ENCODE measurements at regions of chr5 and their contacts with region 1.

Region 1: GRCh38 chr5:79133657-79134451 is 22.2 kb downstream of the BHMT start:
- DNase-seq: peak; percentile 31
- H3K4me3 ChIP-seq: peak overlapping the region; percentile 52
- CTCF ChIP-seq: peak; percentile 84

Region 2: DNA sequence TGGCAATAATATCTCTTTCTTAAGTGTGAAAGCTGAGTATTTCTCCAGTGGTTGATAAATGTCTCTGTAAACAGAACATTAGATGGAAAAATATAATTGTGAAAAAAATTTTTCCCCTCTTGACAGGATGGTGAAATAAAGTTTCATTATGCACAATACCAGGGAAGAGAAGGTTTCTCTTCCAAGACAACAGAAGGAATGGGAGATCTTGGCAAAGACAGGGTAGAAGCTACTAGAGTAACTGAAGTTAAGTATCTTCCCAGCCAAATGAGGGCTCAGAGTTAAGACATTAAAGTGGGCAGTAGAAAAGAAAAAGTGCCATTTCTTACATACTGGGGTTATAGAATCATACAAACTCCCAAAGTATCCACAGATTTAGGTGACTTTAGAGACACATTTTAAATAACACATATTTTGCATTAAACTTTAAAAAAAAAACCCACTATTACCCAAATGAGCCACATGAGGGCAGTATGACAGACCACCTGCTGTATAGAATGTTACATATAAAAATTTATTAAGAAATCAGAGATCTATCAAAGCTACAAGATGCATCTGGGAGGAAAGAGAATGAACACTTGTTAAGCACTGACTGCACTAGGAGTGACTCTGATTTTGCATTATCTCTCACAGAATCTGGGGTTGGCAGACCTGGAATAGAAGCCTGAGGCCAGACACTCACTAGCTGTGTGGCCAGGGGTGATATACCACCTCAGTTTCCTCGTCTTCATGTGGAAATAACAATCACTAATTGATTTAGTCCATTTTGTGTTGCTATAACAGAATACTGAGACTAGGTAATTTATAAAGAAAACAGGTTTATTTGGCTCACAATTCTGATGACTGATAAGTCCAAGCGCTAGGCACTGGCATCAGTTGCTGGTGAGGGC is 247.3 kb before region 1 on chr5:
- CTCF ChIA-PET with region 1: interaction called, 17 read pairs
- POLR2A ChIA-PET with region 1: no interaction called
- DNase-seq: no peak
- H3K4me3 ChIP-seq: no peak overlapping the region
- CTCF ChIP-seq: peak; percentile 27

Region 3: DNA sequence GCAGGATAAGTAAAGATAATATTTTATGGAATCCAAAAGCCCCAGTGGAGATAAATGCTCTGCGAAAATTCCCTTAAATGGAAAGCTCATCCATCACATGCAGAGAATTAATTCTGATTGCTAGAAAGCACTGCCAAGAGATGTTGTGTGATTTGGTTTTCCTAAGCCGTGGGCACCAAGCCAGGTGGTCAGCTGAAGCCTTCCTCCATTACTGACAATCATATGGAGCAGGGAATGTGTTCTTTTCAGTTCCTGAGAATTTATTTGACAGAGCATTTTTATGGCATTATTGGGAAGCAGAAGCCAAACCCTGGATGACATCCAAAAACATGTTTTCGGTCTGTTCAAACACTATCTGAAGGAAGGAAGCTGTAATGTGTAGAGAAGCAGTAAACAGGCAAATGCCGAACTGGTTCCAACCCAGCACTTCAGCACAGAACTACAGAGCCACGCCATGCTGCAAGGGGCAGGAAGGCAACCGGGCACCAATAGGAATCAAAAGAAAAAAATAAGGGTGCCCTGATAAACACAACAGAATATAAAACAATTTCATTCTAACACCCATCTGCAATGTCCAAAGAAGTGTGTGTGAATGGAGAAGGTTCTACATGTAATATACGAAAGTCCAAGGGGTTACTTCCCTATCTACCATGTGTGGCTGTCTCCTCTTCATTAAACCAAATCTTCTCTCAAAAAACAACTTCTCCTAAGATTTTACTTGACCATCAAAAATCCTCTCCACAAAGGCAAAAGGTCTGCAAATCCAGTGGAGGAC is 161.0 kb before region 1 on chr5:
- CTCF ChIA-PET with region 1: interaction called, 16 read pairs
- POLR2A ChIA-PET with region 1: no interaction called
- DNase-seq: no peak
- H3K4me3 ChIP-seq: no peak overlapping the region
- CTCF ChIP-seq: no peak

Region 4: DNA sequence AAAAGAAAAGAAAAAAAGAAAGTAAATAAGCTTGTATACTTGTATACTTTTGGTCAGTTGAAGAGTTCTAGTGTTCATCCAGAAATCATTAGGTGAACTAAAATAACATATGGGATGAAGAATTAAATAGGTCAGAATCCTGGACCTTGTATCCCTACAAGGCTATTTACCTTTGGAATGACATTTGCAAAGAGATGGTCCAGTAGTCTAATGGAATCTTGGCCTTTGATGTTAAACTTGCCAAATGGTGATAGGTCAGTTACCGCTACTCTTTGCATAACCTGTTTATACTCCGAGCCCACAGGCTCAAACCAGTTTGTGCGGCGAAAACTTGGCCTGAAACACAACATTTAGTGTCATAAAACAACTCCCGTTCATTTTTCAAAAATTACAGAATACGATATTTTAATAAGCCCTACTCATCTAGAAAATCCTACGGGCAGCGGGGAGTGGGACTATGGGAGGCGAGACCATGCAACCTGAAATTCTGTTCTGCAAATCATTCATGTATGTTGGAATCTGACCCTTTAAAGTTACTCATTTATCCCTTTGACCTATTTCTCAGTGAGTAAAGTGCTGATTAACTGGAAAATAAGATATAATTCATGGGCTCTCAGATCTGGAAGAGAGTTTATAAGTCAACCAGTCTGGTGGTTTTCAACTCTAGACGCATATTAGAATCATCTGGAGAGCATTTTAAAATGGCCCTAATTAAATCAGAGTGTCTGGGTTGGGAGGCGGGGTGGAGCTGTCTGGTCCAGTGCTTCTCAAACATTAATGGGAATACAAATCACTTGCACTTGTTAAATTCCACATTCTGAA is 103.0 kb before region 1 on chr5:
- CTCF ChIA-PET with region 1: interaction called, 648 read pairs
- POLR2A ChIA-PET with region 1: no interaction called
- DNase-seq: no peak
- H3K4me3 ChIP-seq: no peak overlapping the region
- CTCF ChIP-seq: no peak

Region 5: GRCh38 chr5:79107020-79107796 is 26.6 kb before region 1 on chr5:
- CTCF ChIA-PET with region 1: interaction called, 12 read pairs
- POLR2A ChIA-PET with region 1: no interaction called
- DNase-seq: no peak
- H3K4me3 ChIP-seq: no peak overlapping the region
- CTCF ChIP-seq: no peak

Region 6: GRCh38 chr5:79448336-79448735 is 314.5 kb after region 1 on chr5:
- CTCF ChIA-PET with region 1: interaction called, 15 read pairs
- POLR2A ChIA-PET with region 1: no interaction called
- DNase-seq: peak; percentile 29
- H3K4me3 ChIP-seq: no peak overlapping the region
- CTCF ChIP-seq: no peak

Region 7: GRCh38 chr5:79612667-79613198 is 478.9 kb after region 1 on chr5:
- CTCF ChIA-PET with region 1: no interaction called
- POLR2A ChIA-PET with region 1: no interaction called
- DNase-seq: no peak
- H3K4me3 ChIP-seq: peak overlapping the region; percentile 85
- CTCF ChIP-seq: no peak

Region 8: GRCh38 chr5:80083101-80083890 is 949.4 kb after region 1 on chr5:
- CTCF ChIA-PET with region 1: interaction called, 20 read pairs
- POLR2A ChIA-PET with region 1: no interaction called
- DNase-seq: no peak
- H3K4me3 ChIP-seq: peak overlapping the region; percentile 26
- CTCF ChIP-seq: peak; percentile 59